ENCODE measurements at regions of chr15 and their contacts with region 1.

Region 1: DNA sequence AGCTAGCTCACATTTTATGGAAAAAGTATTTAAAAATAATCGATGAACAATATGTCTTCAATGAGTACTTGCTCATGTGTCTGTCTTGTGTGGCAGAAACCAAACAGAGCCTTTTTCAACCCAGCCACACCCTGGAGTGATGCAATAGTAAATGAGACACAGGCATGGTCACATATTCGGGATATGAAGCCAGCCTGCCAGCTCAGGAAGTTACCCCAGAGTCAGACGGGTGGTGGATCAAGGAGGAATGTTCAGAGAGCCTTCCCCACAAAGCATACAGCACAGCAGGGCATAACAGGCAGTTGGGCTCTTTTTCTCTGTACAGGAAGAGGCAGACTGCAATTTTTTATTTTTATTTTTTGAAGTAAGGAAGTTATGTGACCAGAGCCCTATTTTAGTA is 27.3 kb downstream of the LARP6 start:
- DNase-seq: peak; percentile 36
- H3K4me3 ChIP-seq: no peak overlapping the region
- H3K27ac ChIP-seq: no peak overlapping the region
- H3K4me1 ChIP-seq: no peaks in the 10 kb centered on the region
- H3K27me3 ChIP-seq: no peaks in the 10 kb centered on the region
- CTCF ChIP-seq: no peak
- POLR2A ChIP-seq: no peak

Region 2: GRCh38 chr15:70679919-70680231 is 146.8 kb before region 1 on chr15:
- CTCF ChIA-PET with region 1: interaction called, 12 read pairs
- POLR2A ChIA-PET with region 1: no interaction called
- dilution Hi-C with region 1: no loop called
- intact Hi-C with region 1: no loop called
- DNase-seq: no peak
- H3K4me3 ChIP-seq: no peak overlapping the region
- H3K27ac ChIP-seq: no peak overlapping the region
- H3K4me1 ChIP-seq: peaks cover 12% of the 10 kb centered on the region
- H3K27me3 ChIP-seq: no peaks in the 10 kb centered on the region
- CTCF ChIP-seq: no peak
- POLR2A ChIP-seq: no peak

Region 3: GRCh38 chr15:70853821-70854666 is 27.4 kb after region 1 on chr15 and contains the start of gene LARP6:
- CTCF ChIA-PET with region 1: interaction called, 28 read pairs
- POLR2A ChIA-PET with region 1: no interaction called
- dilution Hi-C with region 1: no loop called
- intact Hi-C with region 1: loop called (anchors 2 kb)
- DNase-seq: peak; percentile 60
- H3K4me3 ChIP-seq: peak within 1 kb of the TSS; percentile 61 to 76 (median 66)
- H3K27ac ChIP-seq: peak within 1 kb of the TSS; percentile 60
- H3K4me1 ChIP-seq: peaks cover 26% of the 10 kb centered on the region
- H3K27me3 ChIP-seq: no peaks in the 10 kb centered on the region
- CTCF ChIP-seq: no peak
- POLR2A ChIP-seq: peak; percentile 55
- total RNA-seq, gene LARP6: 16.9 and 25.2 TPM in 2 replicates

Region 4: DNA sequence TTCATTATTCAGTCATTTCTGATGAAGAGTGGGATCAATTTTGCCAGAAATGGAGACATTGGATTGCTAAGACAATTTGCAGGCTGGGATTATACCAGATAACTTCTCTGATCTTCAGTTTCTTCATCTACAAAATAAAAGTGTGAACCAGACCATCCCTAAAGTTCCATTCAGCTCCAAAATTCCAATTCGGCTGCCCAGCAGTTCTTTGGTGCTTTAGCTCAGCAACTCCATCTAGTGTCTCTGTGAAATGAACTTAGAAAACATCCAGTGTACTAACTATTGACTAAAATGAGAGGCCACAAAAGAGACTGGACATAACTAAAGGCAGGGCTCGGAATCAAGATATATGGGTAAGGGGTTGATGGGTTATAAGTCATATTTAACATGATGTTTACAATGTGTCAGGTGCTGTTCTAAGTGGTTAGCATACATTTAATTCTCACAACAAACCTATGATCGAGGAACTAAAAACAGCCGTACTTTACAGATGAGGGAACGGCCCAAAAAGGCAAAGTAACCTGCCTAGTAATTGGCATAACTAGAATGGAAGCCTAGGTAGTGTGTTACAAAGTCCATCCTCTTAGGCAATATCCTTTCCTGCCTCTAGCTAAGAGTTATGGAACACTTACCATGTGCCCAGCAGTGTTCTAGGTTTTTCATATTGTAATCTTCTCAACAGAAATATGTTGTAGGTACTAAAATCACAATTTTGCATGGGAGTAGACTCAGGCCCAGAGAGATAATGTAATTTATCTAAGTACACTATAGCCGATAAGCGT is 48.6 kb after region 1 on chr15:
- CTCF ChIA-PET with region 1: interaction called, 160 read pairs
- POLR2A ChIA-PET with region 1: no interaction called
- dilution Hi-C with region 1: no loop called
- intact Hi-C with region 1: loop called (anchors 1 kb)
- DNase-seq: peak; percentile 48
- H3K4me3 ChIP-seq: no peak overlapping the region
- H3K27ac ChIP-seq: no peak overlapping the region
- H3K4me1 ChIP-seq: peaks cover 8% of the 10 kb centered on the region
- H3K27me3 ChIP-seq: no peaks in the 10 kb centered on the region
- CTCF ChIP-seq: peak; percentile 23 to 45
- POLR2A ChIP-seq: no peak

Region 5: GRCh38 chr15:71103102-71103676 is 276.6 kb after region 1 on chr15:
- CTCF ChIA-PET with region 1: interaction called, 3 read pairs
- POLR2A ChIA-PET with region 1: no interaction called
- dilution Hi-C with region 1: no loop called
- intact Hi-C with region 1: loop called (anchors 2 kb)
- DNase-seq: peak; percentile 38
- H3K4me3 ChIP-seq: no peak overlapping the region
- H3K27ac ChIP-seq: no peak overlapping the region
- H3K4me1 ChIP-seq: no peaks in the 10 kb centered on the region
- H3K27me3 ChIP-seq: no peaks in the 10 kb centered on the region
- CTCF ChIP-seq: peak; percentile 48 to 78
- POLR2A ChIP-seq: no peak

Measured in endothelial cell of umbilical vein (primary cell).